ENCODE measurements at regions of chr19 and their contacts with region 1.

Region 1: DNA sequence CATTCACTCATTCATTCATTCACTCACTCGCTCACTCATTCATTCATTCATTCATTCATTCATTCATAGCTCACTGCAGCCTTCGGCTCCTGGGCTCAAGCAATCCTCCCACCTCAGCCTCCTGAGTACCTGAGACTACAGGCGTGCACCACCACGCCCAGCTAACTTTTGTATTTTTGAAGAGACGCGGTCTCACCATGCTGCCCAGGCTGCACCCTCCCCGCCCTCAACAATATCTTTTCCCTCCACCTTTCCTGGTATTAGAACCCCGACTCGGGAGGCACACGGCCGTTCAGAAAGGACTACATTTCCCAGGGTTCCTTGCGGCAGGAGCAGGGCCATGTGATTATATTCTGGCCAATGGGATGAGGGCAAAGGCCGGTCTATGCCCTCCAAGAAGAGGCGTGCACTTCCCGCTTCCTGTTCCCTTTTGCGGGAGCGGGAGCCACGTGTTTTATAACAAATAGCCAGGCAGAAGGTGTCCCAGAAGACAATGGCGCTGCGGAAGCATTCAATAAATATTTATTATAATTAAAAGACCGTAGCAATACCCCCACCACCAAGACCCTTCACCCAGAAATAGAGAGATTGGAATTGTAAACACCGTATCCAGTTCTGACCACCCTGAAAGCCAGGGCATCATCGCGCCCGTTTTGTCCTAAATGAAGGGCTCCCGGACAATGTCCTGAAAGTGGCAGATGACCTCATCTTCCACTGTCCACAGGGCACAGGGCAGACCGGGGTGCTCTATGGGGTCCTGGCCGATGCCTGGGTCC is 15.9 kb downstream of the TICAM1 start:
- DNase-seq: peak; percentile 75
- H3K4me3 ChIP-seq: no peak overlapping the region
- H3K27ac ChIP-seq: no peak overlapping the region
- H3K4me1 ChIP-seq: peaks cover 12% of the 10 kb centered on the region
- H3K27me3 ChIP-seq: no peaks in the 10 kb centered on the region
- CTCF ChIP-seq: no peak

Region 2: GRCh38 chr19:4791170-4792018 is 24.2 kb before region 1 on chr19 and contains the start of gene FEM1A:
- CTCF ChIA-PET with region 1: interaction called, 12 read pairs
- dilution Hi-C with region 1: no loop called
- in situ Hi-C with region 1: no loop called
- intact Hi-C with region 1: no loop called
- DNase-seq: peak; percentile 100
- H3K4me3 ChIP-seq: peak within 1 kb of the TSS; percentile 68 to 89 (median 77)
- H3K27ac ChIP-seq: peak within 1 kb of the TSS; percentile 78
- H3K4me1 ChIP-seq: peaks cover 39% of the 10 kb centered on the region
- H3K27me3 ChIP-seq: no peaks in the 10 kb centered on the region
- CTCF ChIP-seq: peak; percentile 98 to 99
- total RNA-seq, gene FEM1A: 12.8 to 17.5 TPM

Region 3: GRCh38 chr19:4831304-4831978 is 15.8 kb after region 1 on chr19 and contains the start of gene TICAM1:
- CTCF ChIA-PET with region 1: no interaction called
- dilution Hi-C with region 1: no loop called
- in situ Hi-C with region 1: no loop called
- intact Hi-C with region 1: loop called (anchors 1 kb)
- DNase-seq: peak; percentile 91
- H3K4me3 ChIP-seq: peak within 1 kb of the TSS; percentile 68 to 99 (median 90)
- H3K27ac ChIP-seq: peak within 1 kb of the TSS; percentile 81
- H3K4me1 ChIP-seq: peaks cover 7% of the 10 kb centered on the region
- H3K27me3 ChIP-seq: no peaks in the 10 kb centered on the region
- CTCF ChIP-seq: peak in 1 of 2 donors; percentile 22
- total RNA-seq, gene TICAM1: 4.0 to 33.3 TPM

Region 4: DNA sequence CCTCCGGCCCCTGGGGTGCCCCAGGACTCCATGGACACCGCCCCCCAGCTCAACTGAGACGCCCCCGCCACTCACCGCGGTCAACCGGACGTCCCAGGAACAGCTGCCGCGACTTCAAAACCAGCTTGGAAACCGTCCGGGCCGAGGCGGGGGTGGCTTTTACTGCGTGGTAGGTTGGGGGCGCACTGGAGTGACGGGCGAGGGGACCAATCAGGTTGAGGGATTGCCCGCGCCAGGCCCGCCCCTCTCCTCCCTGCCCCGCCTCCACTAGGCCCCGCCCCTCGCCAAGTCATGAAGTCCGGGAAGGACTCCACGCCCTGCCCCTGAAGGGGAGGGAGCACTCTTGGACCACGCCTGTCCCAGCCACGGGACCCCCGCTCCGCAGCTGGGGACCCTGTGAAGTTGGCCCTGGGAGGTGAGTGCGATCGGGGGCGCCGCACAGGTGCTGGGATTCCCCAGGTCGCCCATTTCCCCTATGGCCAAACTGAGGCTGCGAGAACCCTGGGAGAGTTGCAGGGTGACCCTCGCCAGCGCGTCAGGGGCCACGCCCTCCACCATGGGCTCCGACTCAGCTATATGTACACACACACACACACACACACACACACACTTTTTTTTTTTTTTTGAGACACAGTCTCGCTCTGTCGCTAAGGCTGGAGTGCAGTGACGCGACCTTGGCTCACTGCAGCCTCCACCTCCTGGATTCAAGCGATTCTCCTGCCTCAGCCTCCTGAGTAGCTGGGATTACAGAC is 52.1 kb after region 1 on chr19 and contains the start of gene PLIN3:
- CTCF ChIA-PET with region 1: no interaction called
- dilution Hi-C with region 1: no loop called
- in situ Hi-C with region 1: no loop called
- intact Hi-C with region 1: loop called (anchors 2 kb)
- DNase-seq: peak; percentile 92
- H3K4me3 ChIP-seq: peak within 1 kb of the TSS; percentile 74 to 100 (median 80)
- H3K27ac ChIP-seq: peak within 1 kb of the TSS; percentile 61
- H3K4me1 ChIP-seq: peaks cover 14% of the 10 kb centered on the region
- H3K27me3 ChIP-seq: no peaks in the 10 kb centered on the region
- CTCF ChIP-seq: no peak
- total RNA-seq, gene PLIN3: 89.4 to 147 TPM

Region 5: GRCh38 chr19:4909897-4910593 is 94.4 kb after region 1 on chr19:
- CTCF ChIA-PET with region 1: no interaction called
- dilution Hi-C with region 1: no loop called
- in situ Hi-C with region 1: loop called (anchors 5 to 10 kb)
- intact Hi-C with region 1: loop called (anchors 1 kb)
- DNase-seq: peak; percentile 89
- H3K4me3 ChIP-seq: peak overlapping the region; percentile 57 to 71 (median 64)
- H3K27ac ChIP-seq: peak overlapping the region; percentile 76
- H3K4me1 ChIP-seq: peaks cover 48% of the 10 kb centered on the region
- H3K27me3 ChIP-seq: no peaks in the 10 kb centered on the region
- CTCF ChIP-seq: no peak

Region 6: GRCh38 chr19:4968462-4969291 is 153.1 kb after region 1 on chr19 and contains the start of gene KDM4B:
- CTCF ChIA-PET with region 1: no interaction called
- dilution Hi-C with region 1: no loop called
- in situ Hi-C with region 1: no loop called
- intact Hi-C with region 1: loop called (anchors 1 kb)
- DNase-seq: peak; percentile 100
- H3K4me3 ChIP-seq: peak within 1 kb of the TSS; percentile 67 to 84 (median 68)
- H3K27ac ChIP-seq: peak within 1 kb of the TSS; percentile 58
- H3K4me1 ChIP-seq: peaks cover 28% of the 10 kb centered on the region
- H3K27me3 ChIP-seq: no peaks in the 10 kb centered on the region
- CTCF ChIP-seq: no peak
- total RNA-seq, gene KDM4B: 20.3 to 33.5 TPM

Region 7: GRCh38 chr19:5112681-5113557 is 297.3 kb after region 1 on chr19:
- CTCF ChIA-PET with region 1: no interaction called
- dilution Hi-C with region 1: no loop called
- in situ Hi-C with region 1: no loop called
- intact Hi-C with region 1: no loop called
- DNase-seq: no peak
- H3K4me3 ChIP-seq: no peak overlapping the region
- H3K27ac ChIP-seq: no peak overlapping the region
- H3K4me1 ChIP-seq: no peaks in the 10 kb centered on the region
- H3K27me3 ChIP-seq: no peaks in the 10 kb centered on the region
- CTCF ChIP-seq: no peak

Measured in mammary epithelial cell (primary cell).